HEK293 (cell line): ENCODE measurements at regions of chr12 and their contacts with region 1.

Region 1: GRCh38 chr12:751192-751998 is 984 bp upstream of the WNK1 start:
- H3K4me3 ChIP-seq: peak overlapping the region; percentile 44
- H3K27ac ChIP-seq: peak overlapping the region; percentile 77
- H3K4me1 ChIP-seq: no peaks in the 10 kb centered on the region; the same call in 1 of the 2 replicates
- CTCF ChIP-seq: peak; percentile 96

Region 2: GRCh38 chr12:569803-570434 is 181.5 kb before region 1 on chr12:
- CTCF ChIA-PET with region 1: interaction called, 46 read pairs
- POLR2A ChIA-PET with region 1: interaction called, 26 read pairs
- H3K4me3 ChIP-seq: peak overlapping the region; percentile 63
- H3K27ac ChIP-seq: peak overlapping the region; percentile 52; the same call in 1 of the 2 replicates
- H3K4me1 ChIP-seq: peaks cover 6% of the 10 kb centered on the region
- CTCF ChIP-seq: peak; percentile 97

Region 3: DNA sequence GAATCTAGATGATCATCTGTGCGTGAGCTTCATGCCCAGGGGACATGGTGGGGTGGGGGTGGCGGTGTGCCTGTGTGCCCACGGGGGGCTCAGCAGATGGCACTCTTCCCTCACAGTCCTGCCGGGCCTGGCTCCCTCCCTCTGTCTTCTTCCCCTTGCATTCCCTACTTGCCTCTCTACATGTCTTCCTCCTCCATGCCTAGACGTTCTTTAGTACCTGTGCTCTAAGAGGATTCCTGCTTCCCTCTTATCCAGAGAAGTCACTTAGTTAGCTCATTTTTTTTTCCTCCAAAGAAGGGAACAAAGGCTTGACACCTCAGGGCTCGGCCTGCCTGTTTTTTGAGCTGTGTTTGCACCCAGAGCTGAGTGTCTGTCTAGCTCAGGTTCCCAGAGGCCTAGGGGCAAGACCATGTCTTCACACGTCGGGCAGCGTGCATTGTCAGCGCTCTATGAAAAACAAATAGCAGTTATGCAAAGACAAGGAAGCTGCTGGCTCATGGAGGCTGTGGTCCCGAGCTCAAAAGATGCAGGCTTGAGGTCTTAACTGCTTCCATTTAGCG is 136.9 kb before region 1 on chr12:
- CTCF ChIA-PET with region 1: interaction called, 10 read pairs
- POLR2A ChIA-PET with region 1: no interaction called
- H3K4me3 ChIP-seq: no peak overlapping the region
- H3K27ac ChIP-seq: no peak overlapping the region
- H3K4me1 ChIP-seq: no peaks in the 10 kb centered on the region
- CTCF ChIP-seq: peak; percentile 81

Region 4: DNA sequence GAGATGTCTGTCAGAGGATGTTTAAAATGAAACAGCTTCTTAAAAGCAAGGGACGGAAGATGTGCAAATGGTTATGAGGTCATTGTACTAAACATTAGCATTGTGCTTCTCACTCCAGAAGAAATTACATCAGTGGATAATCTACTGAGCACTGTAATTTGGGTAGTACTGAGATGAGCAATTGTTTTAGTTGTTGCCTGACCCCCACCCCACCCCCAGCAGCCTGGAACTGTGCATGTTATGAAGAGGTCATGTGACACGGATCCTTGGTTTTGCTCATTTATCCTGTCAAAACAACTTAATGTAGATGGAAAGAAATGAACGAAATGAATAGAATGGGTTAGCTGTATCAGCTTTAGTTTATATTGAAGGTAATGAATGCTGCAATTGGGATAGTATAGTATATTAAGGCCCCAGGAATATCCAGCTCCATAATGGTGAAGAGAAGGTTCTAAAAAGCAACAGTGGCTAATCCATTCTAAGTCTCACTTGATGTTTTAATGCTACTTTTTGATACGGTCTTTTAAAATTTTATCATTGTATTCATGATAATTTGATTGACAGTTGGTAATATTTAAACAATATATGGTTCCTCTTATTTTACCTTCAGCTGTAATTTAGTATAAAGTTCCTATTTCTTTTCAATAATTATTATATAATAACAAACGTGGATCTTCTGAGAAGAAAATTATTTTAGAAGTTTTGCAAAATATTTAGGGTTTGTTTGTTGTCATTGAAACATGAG is 59.4 kb after region 1 on chr12:
- CTCF ChIA-PET with region 1: interaction called, 65 read pairs
- POLR2A ChIA-PET with region 1: interaction called, 8 read pairs
- H3K4me3 ChIP-seq: no peak overlapping the region
- H3K27ac ChIP-seq: no peak overlapping the region
- H3K4me1 ChIP-seq: peaks cover 28% of the 10 kb centered on the region
- CTCF ChIP-seq: no peak

Region 5: GRCh38 chr12:884746-885414 is 133.5 kb after region 1 on chr12:
- CTCF ChIA-PET with region 1: no interaction called
- POLR2A ChIA-PET with region 1: no interaction called
- H3K4me3 ChIP-seq: no peak overlapping the region
- H3K27ac ChIP-seq: no peak overlapping the region
- H3K4me1 ChIP-seq: no peaks in the 10 kb centered on the region
- CTCF ChIP-seq: no peak

Region 6: DNA sequence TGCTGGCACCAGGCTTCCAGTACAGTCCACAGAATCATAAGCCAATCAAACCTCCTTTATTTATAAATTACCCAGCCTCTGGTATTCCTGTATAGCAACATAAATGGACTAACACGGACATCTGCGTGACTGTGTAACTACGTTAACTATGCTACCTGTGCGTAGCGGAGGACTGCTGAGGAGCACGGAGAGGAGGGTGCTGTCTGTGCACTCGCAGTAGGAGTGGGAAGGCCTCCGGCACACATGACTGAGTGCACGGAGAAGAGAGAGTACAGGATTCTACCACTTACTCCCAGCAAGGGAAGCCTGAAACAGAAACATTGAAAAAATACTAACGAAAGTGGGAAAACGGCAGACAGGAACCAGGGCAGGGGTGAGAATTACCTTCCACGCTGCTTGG is 175.2 kb after region 1 on chr12:
- CTCF ChIA-PET with region 1: no interaction called
- POLR2A ChIA-PET with region 1: no interaction called
- H3K4me3 ChIP-seq: no peak overlapping the region
- H3K27ac ChIP-seq: no peak overlapping the region
- H3K4me1 ChIP-seq: no peaks in the 10 kb centered on the region
- CTCF ChIP-seq: no peak

Region 7: GRCh38 chr12:949453-950191 is 198.2 kb after region 1 on chr12 and contains the start of gene RAD52:
- CTCF ChIA-PET with region 1: interaction called, 7 read pairs
- POLR2A ChIA-PET with region 1: interaction called, 13 read pairs
- H3K4me3 ChIP-seq: peak within 1 kb of the TSS; percentile 92
- H3K27ac ChIP-seq: peak within 1 kb of the TSS; percentile 91
- H3K4me1 ChIP-seq: no peaks in the 10 kb centered on the region; the same call in 1 of the 2 replicates
- CTCF ChIP-seq: peak; percentile 99